ENCODE measurements at regions of chr9 and their contacts with region 1.

Region 1: GRCh38 chr9:22008736-22009562 is at the start of gene CDKN2B:
- DNase-seq: peak; percentile 78
- ATAC-seq: peak; percentile 94
- H3K4me3 Mint-ChIP-seq: peak within 1 kb of the TSS; percentile 87
- H3K27ac Mint-ChIP-seq: peak within 1 kb of the TSS; percentile 24
- H3K4me1 Mint-ChIP-seq: peaks cover 34% of the 10 kb centered on the region
- H3K27me3 Mint-ChIP-seq: peaks cover 29% of the 10 kb centered on the region
- CTCF ChIP-seq: peak; percentile 79
- total RNA-seq, gene CDKN2B: 0.32 and 0.38 TPM in 2 replicates

Region 2: DNA sequence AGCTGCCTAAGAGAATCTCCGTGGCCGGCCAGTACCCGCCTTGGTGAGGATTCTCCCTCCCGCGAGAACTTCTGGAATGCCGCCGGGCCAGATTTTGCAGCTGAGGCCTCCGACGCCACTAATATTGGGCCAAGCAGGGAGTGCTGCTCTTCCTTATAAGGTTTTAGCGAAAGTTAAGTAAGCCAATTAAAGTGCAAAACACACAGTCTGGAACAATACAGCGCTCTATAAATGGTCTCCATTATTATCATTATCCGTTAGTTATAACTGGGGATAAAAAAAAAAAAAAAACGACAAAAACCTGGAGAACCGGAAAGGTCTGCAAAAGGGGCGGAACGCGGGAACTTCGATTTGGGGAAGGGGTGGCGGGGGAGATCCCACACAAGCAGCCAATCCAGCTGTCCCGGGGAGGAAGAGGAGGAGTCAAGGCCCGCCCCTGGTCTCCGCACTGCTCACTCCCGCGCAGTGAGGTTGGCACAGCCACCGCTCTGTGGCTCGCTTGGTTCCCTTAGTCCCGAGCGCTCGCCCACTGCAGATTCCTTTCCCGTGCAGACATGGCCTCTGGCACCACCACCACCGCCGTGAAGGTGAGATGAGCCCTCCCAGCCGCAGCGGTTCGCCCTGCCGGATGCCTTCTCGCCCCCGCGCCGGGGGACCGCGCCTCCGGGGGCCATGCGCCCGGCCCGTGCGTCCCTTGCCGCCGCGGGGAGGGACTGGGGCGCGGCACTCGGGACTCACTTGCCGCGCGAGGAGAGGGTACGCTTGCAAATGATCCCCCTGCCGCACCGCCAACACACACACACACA is 206.6 kb before region 1 on chr9 and contains the start of gene MTAP:
- CTCF ChIA-PET with region 1: interaction called, 4 read pairs
- POLR2A ChIA-PET with region 1: interaction called, 4 read pairs
- intact Hi-C with region 1: loop called (anchors 2 kb)
- DNase-seq: peak; percentile 68
- ATAC-seq: peak; percentile 88
- H3K4me3 Mint-ChIP-seq: peak within 1 kb of the TSS; percentile 99
- H3K27ac Mint-ChIP-seq: peak within 1 kb of the TSS; percentile 91
- H3K4me1 Mint-ChIP-seq: peaks cover 53% of the 10 kb centered on the region
- H3K27me3 Mint-ChIP-seq: peaks cover 15% of the 10 kb centered on the region
- CTCF ChIP-seq: no peak
- total RNA-seq, gene MTAP: 30.4 and 43.2 TPM in 2 replicates

Region 3: DNA sequence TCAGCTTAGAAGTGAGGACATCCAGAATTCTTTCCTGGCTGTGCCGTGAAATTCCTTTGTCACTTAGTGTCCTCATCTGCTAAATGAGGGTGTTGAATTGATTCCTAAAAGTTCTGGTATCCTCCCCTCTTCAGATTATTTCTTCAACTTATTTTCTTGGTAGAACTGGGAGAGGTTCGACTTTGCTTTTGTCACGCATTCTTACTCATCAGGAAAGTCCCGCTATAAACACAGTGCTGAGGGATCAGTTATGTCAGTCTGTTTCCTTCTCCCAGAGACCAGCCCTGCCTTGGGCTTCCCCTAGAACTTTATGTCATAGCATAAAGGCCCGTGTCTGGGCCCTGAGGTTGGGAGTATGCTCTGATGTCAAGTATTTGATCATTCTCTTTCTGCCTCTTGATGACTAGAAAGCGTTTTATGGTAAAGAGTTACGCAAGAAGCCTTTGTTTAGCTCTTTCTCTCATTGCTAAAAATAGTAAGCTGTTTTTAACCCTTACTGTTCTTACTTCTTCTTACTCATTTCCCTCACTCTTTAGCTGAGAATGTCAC is 176.9 kb before region 1 on chr9:
- CTCF ChIA-PET with region 1: interaction called, 10 read pairs
- POLR2A ChIA-PET with region 1: no interaction called
- intact Hi-C with region 1: no loop called
- DNase-seq: no peak
- ATAC-seq: peak; percentile 54
- H3K4me3 Mint-ChIP-seq: peak overlapping the region; percentile 40
- H3K27ac Mint-ChIP-seq: peak overlapping the region; percentile 86
- H3K4me1 Mint-ChIP-seq: peaks cover 59% of the 10 kb centered on the region
- H3K27me3 Mint-ChIP-seq: no peaks in the 10 kb centered on the region
- CTCF ChIP-seq: no peak

Region 4: DNA sequence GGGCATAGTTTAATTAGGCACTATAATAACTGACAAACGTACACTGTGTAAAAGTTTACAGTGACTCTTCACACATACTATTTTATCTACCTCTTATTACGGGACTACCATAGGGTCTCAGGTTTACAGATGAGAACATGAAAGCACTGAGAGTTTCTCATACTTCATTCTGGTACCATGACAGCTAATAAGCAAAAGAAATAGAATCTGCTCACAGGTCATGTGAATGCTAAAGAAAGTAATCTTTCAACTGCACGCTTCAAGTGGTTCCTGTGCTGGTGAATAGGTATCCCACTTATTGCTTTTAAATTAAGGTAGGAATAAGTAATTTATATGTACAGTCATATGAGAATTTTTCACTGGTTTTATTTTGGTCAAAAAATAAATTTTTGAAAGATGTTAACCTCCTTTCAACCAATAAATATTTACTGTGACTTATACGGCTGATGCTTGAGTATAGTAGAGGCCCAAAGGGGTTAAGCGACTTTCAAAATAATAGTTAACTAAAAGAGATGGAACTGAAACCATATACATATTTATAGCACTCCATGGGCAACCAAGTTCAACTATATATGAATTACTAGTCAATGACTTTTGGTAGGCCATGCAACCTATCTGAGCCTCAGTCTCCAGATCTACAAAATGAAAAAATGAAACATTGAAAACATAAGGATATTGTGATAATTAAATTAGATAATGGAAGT is 22.8 kb before region 1 on chr9:
- CTCF ChIA-PET with region 1: interaction called, 10 read pairs
- POLR2A ChIA-PET with region 1: no interaction called
- intact Hi-C with region 1: loop called (anchors 2 kb)
- DNase-seq: no peak
- ATAC-seq: no peak
- H3K4me3 Mint-ChIP-seq: no peak overlapping the region
- H3K27ac Mint-ChIP-seq: no peak overlapping the region
- H3K4me1 Mint-ChIP-seq: peaks cover 4% of the 10 kb centered on the region
- H3K27me3 Mint-ChIP-seq: peaks cover 49% of the 10 kb centered on the region
- CTCF ChIP-seq: no peak

Region 5: GRCh38 chr9:22030101-22030598 is 21.2 kb after region 1 on chr9:
- CTCF ChIA-PET with region 1: interaction called, 3 read pairs
- POLR2A ChIA-PET with region 1: no interaction called
- intact Hi-C with region 1: loop called (anchors 2 kb)
- DNase-seq: no peak
- ATAC-seq: peak; percentile 56
- H3K4me3 Mint-ChIP-seq: no peak overlapping the region
- H3K27ac Mint-ChIP-seq: no peak overlapping the region
- H3K4me1 Mint-ChIP-seq: peaks cover 7% of the 10 kb centered on the region
- H3K27me3 Mint-ChIP-seq: no peaks in the 10 kb centered on the region
- CTCF ChIP-seq: no peak

Region 6: GRCh38 chr9:22158927-22159346 is 150.0 kb after region 1 on chr9:
- CTCF ChIA-PET with region 1: no interaction called
- POLR2A ChIA-PET with region 1: no interaction called
- intact Hi-C with region 1: loop called (anchors 5 kb)
- DNase-seq: no peak
- ATAC-seq: no peak
- H3K4me3 Mint-ChIP-seq: no peak overlapping the region
- H3K27ac Mint-ChIP-seq: no peak overlapping the region
- H3K4me1 Mint-ChIP-seq: peaks cover 20% of the 10 kb centered on the region
- H3K27me3 Mint-ChIP-seq: no peaks in the 10 kb centered on the region
- CTCF ChIP-seq: no peak

Region 7: GRCh38 chr9:22452415-22453010 is 443.6 kb after region 1 on chr9:
- CTCF ChIA-PET with region 1: interaction called, 5 read pairs
- POLR2A ChIA-PET with region 1: no interaction called
- intact Hi-C with region 1: loop called (anchors 10 kb)
- DNase-seq: no peak
- ATAC-seq: peak; percentile 65
- H3K4me3 Mint-ChIP-seq: no peak overlapping the region
- H3K27ac Mint-ChIP-seq: no peak overlapping the region
- H3K4me1 Mint-ChIP-seq: peaks cover 9% of the 10 kb centered on the region
- H3K27me3 Mint-ChIP-seq: peaks cover 42% of the 10 kb centered on the region
- CTCF ChIP-seq: peak; percentile 90

Measured in activated B cell treated with CpG ODN at 0.5 μM for 24 hours (primary cell).